ENCODE measurements at regions of chr4 and their contacts with region 1.

Region 1: GRCh38 chr4:177367336-177367735 is 57.7 kb downstream of the NEIL3 start:
- DNase-seq: peak; percentile 15
- ATAC-seq: no peak
- H3K4me3 Mint-ChIP-seq: no peak overlapping the region
- H3K27ac Mint-ChIP-seq: no peak overlapping the region
- H3K4me1 Mint-ChIP-seq: peaks cover 2% of the 10 kb centered on the region
- H3K27me3 Mint-ChIP-seq: no peaks in the 10 kb centered on the region

Region 2: DNA sequence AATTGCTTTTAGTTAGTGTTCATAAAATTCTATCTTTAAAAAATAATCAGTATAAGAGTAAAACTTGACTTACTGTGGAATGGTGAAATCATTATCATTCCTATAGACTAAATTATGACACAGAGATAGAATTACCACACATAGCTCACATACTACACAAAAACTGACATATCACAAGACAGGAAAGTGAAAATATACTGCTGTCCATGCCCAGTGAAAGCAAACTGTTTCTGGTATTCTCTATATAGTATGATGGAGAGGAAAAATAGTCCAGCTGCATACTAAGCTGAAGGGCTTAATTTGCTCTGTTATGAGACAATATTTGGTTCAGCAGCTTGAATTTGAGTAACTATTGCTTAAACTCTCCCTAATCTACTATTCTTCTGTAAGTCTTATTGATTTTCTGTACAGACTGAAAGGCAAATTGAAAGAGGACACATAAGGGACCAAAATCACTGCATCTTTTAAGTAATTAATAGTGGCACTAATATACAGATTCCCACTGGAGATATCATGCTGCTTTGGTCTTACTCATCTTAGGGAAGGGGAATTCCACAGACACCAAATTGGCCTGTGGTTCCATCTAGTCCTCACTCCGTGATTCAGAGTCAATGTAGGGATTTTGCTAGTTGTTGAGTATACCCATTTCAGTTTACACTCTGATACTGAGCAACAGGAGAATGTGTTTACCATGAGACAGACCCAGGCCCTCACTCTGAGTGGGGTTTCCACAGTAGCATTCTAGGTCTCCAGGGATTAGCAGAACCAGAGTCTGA is 122.3 kb after region 1 on chr4:
- CTCF ChIA-PET with region 1: no interaction called
- POLR2A ChIA-PET with region 1: no interaction called
- intact Hi-C with region 1: no loop called
- DNase-seq: no peak
- ATAC-seq: no peak
- H3K4me3 Mint-ChIP-seq: no peak overlapping the region
- H3K27ac Mint-ChIP-seq: no peak overlapping the region
- H3K4me1 Mint-ChIP-seq: peaks cover 5% of the 10 kb centered on the region
- H3K27me3 Mint-ChIP-seq: no peaks in the 10 kb centered on the region

Region 3: DNA sequence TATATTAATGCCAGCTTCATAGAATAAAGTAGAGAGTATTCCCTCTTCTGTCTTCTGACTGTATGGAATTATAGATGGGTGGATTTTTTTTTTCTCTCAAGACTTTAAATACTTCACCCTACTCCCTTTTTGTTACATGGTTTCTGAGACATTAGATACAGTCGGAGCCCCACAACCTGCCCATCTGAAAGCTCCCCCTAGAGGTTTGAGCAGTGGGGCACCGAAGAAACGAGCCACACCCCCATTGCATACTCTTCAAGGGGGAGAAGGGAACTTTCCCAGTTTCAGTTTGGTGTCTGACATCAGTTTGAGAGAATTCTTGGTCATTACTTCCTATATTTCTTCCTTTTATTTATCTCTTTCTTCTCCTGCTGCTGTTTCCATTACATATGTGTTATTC is 512.5 kb after region 1 on chr4:
- CTCF ChIA-PET with region 1: no interaction called
- POLR2A ChIA-PET with region 1: no interaction called
- intact Hi-C with region 1: loop called in 1 of 2 experiments (anchors 10 kb)
- DNase-seq: no peak
- ATAC-seq: no peak
- H3K4me3 Mint-ChIP-seq: no peak overlapping the region
- H3K27ac Mint-ChIP-seq: no peak overlapping the region
- H3K4me1 Mint-ChIP-seq: no peaks in the 10 kb centered on the region
- H3K27me3 Mint-ChIP-seq: no peaks in the 10 kb centered on the region

Measured in activated CD4-positive, alpha-beta T cell treated with anti-CD3 and anti-CD28 coated beads for 36 hours (primary cell).